Natural killer cell (primary cell): ENCODE measurements at regions of chr10 and their contacts with region 1.

Region 1: DNA sequence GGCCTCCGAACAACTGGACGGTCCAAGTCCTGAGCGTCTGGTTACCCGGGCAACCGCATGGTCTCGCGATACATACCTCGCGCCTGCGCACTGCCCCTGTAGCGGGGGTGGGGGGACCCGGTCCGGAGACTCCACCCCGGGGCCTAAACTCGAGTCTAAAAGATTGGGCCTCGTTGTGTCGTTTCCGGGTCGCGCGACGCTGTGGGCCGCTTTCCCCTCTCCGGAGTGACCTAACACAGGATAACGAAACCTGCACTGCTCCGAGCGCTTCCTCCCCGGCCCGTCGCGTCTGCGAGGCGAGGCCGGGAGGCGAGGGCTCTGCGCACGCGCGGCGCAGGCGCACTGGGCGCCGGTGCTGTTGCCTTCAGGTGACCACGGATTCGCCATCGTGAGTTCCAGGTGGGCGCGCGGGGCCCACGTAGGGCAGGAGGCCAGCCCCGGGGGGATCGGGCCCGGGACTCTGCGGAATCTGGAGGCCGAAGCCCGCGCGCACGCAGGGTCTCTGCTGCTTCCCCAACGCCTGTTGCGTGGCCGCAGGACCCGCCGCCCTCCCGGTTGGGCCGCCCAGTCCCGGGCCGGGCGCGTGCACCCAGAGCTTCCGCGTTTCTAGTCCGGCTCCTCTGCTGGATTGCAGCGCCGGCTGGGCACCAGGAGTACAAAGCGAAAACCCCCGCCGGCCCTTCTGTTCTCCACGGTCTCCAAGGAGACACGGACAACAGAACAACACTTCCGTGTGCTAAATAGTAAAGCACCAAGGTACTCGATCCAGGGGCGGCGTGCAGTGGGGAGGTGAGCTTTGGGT is at the start of gene RPP38:
- DNase-seq: peak; percentile 94 to 97
- ATAC-seq: peak; percentile 81 to 90 (median 82)
- H3K4me3 ChIP-seq: peak within 1 kb of the TSS; percentile 74
- H3K4me3 Mint-ChIP-seq: peak within 1 kb of the TSS; percentile 95
- H3K27ac ChIP-seq: peak within 1 kb of the TSS; percentile 94
- H3K27ac Mint-ChIP-seq: peak within 1 kb of the TSS; percentile 97 to 98
- H3K4me1 ChIP-seq: peaks cover 27% of the 10 kb centered on the region
- H3K4me1 Mint-ChIP-seq: peaks cover 27 to 41% of the 10 kb centered on the region in 2 donors
- H3K27me3 ChIP-seq: no peaks in the 10 kb centered on the region
- H3K27me3 Mint-ChIP-seq: no peaks in the 10 kb centered on the region
- CTCF ChIP-seq: no peak
- total RNA-seq, gene RPP38: 7.5 to 12.7 (median 8.4) TPM

Region 2: GRCh38 chr10:14878266-14879054 is 218.8 kb before region 1 on chr10 and contains the start of gene SUV39H2:
- intact Hi-C with region 1: loop called (anchors 2 kb)
- DNase-seq: peak; percentile 92 to 95
- ATAC-seq: peak; percentile 91 to 98 (median 94)
- H3K4me3 ChIP-seq: peak within 1 kb of the TSS; percentile 92
- H3K4me3 Mint-ChIP-seq: peak within 1 kb of the TSS; percentile 92
- H3K27ac ChIP-seq: peak within 1 kb of the TSS; percentile 59
- H3K27ac Mint-ChIP-seq: peak within 1 kb of the TSS; percentile 77 to 88
- H3K4me1 ChIP-seq: peaks cover 15% of the 10 kb centered on the region
- H3K4me1 Mint-ChIP-seq: peaks cover 26 to 28% of the 10 kb centered on the region in 2 donors
- H3K27me3 ChIP-seq: no peaks in the 10 kb centered on the region
- H3K27me3 Mint-ChIP-seq: no peaks in the 10 kb centered on the region
- CTCF ChIP-seq: no peak
- total RNA-seq, gene SUV39H2: 3.8 to 5.4 (median 5.2) TPM

Region 3: DNA sequence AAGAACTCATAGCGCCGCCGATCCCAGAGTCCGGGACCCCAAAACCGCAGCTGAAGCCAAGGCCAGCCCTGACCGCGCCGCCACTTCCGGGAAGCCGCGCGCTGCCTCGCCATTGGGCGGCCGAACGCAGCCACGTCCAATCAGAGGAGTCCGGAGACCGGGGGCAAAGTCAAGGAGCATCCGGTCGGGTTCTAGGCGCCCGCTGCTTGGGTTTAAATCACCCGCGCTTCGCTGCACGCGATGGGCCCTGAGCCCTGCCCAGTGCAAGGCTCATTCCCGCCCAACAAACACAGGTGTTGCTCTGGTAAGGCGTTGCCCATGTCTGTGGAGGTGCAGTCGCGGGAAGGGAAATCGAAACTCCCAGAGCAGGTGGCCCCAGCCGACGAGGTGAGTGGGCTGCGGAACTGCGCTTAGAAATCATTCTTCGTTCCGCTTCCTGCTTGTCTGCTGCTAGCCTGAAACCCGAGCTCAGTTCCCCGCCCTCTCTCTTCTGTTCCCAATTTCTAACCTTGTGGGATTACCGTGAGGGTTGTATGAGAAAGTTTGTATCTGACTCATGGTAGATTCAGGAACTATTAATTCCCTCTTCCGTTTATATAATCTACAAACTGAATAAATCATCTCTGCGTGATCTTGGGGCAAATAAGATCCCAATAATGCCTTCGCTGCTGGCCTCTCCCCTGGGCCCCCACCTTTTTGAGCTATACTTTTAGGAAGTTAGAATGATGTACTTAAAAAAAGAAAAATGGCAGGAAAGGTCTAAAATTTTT is 143.0 kb before region 1 on chr10 and contains the start of gene DCLRE1C:
- intact Hi-C with region 1: loop called (anchors 2 kb)
- DNase-seq: peak; percentile 88 to 92
- ATAC-seq: peak; percentile 90 to 97 (median 96)
- H3K4me3 ChIP-seq: peak within 1 kb of the TSS; percentile 86
- H3K4me3 Mint-ChIP-seq: peak within 1 kb of the TSS; percentile 97
- H3K27ac ChIP-seq: peak within 1 kb of the TSS; percentile 93
- H3K27ac Mint-ChIP-seq: peak within 1 kb of the TSS; percentile 94 to 95
- H3K4me1 ChIP-seq: peaks cover 34% of the 10 kb centered on the region
- H3K4me1 Mint-ChIP-seq: peaks cover 49 to 50% of the 10 kb centered on the region in 2 donors
- H3K27me3 ChIP-seq: no peaks in the 10 kb centered on the region
- H3K27me3 Mint-ChIP-seq: no peaks in the 10 kb centered on the region
- CTCF ChIP-seq: no peak
- total RNA-seq, gene DCLRE1C: 21.7 to 31.3 (median 22.3) TPM

Region 4: DNA sequence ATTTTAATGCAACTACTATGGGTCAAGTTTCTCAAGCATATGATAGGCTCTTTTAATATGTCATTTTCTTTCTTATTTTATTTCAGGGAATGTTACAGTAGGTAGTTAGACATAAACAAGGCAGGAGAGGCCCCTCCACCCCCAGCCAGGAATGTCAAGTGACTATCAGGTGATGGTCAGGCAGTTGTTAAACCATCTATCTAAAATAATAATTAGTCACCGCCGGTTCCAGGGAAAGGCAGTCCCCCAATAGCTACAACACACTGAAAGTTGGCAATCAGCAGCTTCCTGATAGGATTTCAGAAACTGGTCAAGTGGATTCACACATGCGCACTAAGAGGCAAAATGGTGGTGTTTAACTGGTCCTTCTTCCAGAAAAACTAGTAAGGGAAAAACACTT is 44.2 kb before region 1 on chr10:
- intact Hi-C with region 1: no loop called
- DNase-seq: no peak
- ATAC-seq: no peak
- H3K4me3 ChIP-seq: no peak overlapping the region
- H3K4me3 Mint-ChIP-seq: no peak overlapping the region
- H3K27ac ChIP-seq: no peak overlapping the region
- H3K27ac Mint-ChIP-seq: no peak overlapping the region
- H3K4me1 ChIP-seq: no peaks in the 10 kb centered on the region
- H3K4me1 Mint-ChIP-seq: no peaks in the 10 kb centered on the region
- H3K27me3 ChIP-seq: no peaks in the 10 kb centered on the region
- H3K27me3 Mint-ChIP-seq: peaks cover 3 to 12% of the 10 kb centered on the region in 2 donors
- CTCF ChIP-seq: no peak

Region 5: GRCh38 chr10:15168781-15169554 is 71.8 kb after region 1 on chr10:
- intact Hi-C with region 1: loop called (anchors 5 kb)
- DNase-seq: peak; percentile 81 to 97
- ATAC-seq: peak; percentile 85 to 94 (median 86)
- H3K4me3 ChIP-seq: peak overlapping the region; percentile 12
- H3K4me3 Mint-ChIP-seq: peak overlapping the region; percentile 87
- H3K27ac ChIP-seq: peak overlapping the region; percentile 27
- H3K27ac Mint-ChIP-seq: peak overlapping the region; percentile 90 to 93
- H3K4me1 ChIP-seq: peaks cover 23% of the 10 kb centered on the region
- H3K4me1 Mint-ChIP-seq: peaks cover 49 to 55% of the 10 kb centered on the region in 2 donors
- H3K27me3 ChIP-seq: no peaks in the 10 kb centered on the region
- H3K27me3 Mint-ChIP-seq: no peaks in the 10 kb centered on the region
- CTCF ChIP-seq: no peak

Region 6: GRCh38 chr10:15209827-15210509 is 112.8 kb after region 1 on chr10:
- intact Hi-C with region 1: no loop called
- DNase-seq: peak; percentile 53 to 91
- ATAC-seq: peak; percentile 54 to 71 (median 62)
- H3K4me3 ChIP-seq: no peak overlapping the region
- H3K4me3 Mint-ChIP-seq: no peak overlapping the region
- H3K27ac ChIP-seq: no peak overlapping the region
- H3K27ac Mint-ChIP-seq: peak overlapping the region; percentile 82 to 84
- H3K4me1 ChIP-seq: peaks cover 27% of the 10 kb centered on the region
- H3K4me1 Mint-ChIP-seq: peaks cover 23 to 24% of the 10 kb centered on the region in 2 donors
- H3K27me3 ChIP-seq: no peaks in the 10 kb centered on the region
- H3K27me3 Mint-ChIP-seq: no peaks in the 10 kb centered on the region
- CTCF ChIP-seq: peak; percentile 92